Upper lobe of right lung (tissue), 1 donor: ENCODE measurements at regions of chr1 and their contacts with region 1.

Region 1: DNA sequence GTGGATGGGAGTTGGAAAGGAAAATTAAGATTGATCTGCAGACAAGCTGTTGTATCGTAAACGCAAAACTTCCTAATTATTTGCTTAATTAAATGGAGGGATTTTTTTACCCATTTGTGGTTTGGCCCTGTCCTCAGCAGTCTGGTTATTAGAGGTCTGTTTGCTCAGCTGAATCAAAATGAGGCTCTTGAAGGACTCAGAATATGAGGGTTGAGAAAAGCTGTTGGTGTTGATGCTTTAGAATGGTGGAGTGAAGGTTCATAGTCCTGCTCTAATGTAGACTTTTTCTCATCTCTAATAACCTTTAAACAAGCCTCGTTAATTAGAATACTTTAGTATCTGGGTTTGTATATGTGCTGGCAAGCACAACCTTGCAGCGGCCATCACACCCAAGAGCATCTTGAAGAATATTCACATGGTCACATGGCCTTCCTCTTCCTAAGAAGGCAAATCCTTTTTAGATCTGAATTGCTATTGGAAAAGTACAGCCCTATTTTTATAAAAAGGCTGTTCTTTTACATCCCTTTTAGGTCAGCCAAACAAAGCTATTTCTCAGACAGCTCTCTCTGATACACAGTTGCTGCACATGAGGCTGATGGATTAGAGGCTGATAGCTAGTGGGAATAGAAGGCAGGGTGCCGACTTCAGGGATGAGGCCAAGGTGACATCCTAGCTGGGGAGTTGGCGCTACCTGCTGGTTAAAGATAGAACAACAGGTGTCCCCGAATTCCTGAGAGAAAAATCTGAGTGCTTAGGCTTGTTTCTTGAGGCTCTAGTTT is 53.8 kb downstream of the MACF1 start:
- DNase-seq: no peak
- ATAC-seq: peak; percentile 93
- H3K4me3 ChIP-seq: no peak overlapping the region
- H3K27ac ChIP-seq: peak overlapping the region; percentile 32
- H3K4me1 ChIP-seq: peaks cover 8% of the 10 kb centered on the region
- H3K27me3 ChIP-seq: no peaks in the 10 kb centered on the region
- CTCF ChIP-seq: peak; percentile 79

Region 2: GRCh38 chr1:39196244-39197215 is 61.8 kb before region 1 on chr1:
- intact Hi-C with region 1: loop called (anchors 10 kb)
- DNase-seq: no peak
- ATAC-seq: peak; percentile 50
- H3K4me3 ChIP-seq: no peak overlapping the region
- H3K27ac ChIP-seq: peak overlapping the region; percentile 24
- H3K4me1 ChIP-seq: peaks cover 58% of the 10 kb centered on the region
- H3K27me3 ChIP-seq: no peaks in the 10 kb centered on the region
- CTCF ChIP-seq: no peak